Mammary epithelial cell (primary cell): ENCODE measurements at regions of chr7 and their contacts with region 1.

Region 1: DNA sequence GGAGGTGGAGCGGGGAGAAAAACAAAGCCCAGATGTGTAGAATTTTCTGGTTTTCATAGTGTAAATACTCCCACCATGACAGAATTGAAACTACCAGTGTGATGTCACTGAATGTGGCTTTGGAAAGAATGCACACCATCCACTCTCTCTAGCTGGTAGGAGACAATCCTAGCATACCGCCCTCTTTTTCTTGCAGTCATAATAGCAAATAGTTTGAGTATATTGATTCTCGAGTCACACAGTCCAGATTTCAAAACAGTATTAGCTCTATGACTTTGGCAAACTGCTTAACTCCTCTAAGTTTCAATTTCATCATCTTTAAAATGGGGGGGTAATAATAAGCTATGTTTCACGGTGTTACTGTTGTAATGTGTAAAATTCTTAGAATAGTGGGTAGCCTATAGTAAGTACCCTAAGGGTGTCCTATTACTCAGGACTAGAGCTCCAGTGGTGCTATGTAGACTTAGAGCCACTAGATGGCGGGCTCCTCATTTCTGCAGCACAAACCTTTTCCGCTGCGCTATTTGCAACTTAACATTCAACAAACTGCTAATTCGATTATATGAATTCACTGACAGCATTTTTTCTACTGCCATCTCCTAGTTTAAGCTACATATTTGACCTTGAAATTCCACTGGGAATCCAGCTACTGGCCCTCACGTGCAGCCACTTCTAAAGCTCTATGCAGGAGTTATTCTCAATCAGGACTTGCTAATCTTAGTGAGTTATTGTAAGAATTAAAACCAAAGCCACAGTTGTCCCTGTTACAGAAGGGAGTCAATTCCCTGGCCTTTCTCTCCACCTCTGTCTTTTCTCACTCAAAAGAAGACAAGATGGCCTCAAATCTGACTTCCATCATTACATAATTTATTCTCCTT is 18.7 kb downstream of the TAS2R40 start:
- DNase-seq: peak; percentile 58
- H3K4me3 ChIP-seq: no peak overlapping the region
- H3K27ac ChIP-seq: no peak overlapping the region
- H3K4me1 ChIP-seq: peaks cover 13% of the 10 kb centered on the region
- H3K27me3 ChIP-seq: no peaks in the 10 kb centered on the region
- CTCF ChIP-seq: peak; percentile 92 to 95

Region 2: GRCh38 chr7:143104832-143105241 is 135.7 kb before region 1 on chr7:
- CTCF ChIA-PET with region 1: no interaction called
- dilution Hi-C with region 1: no loop called
- in situ Hi-C with region 1: no loop called
- intact Hi-C with region 1: no loop called
- DNase-seq: no peak
- H3K4me3 ChIP-seq: no peak overlapping the region
- H3K27ac ChIP-seq: no peak overlapping the region
- H3K4me1 ChIP-seq: no peaks in the 10 kb centered on the region
- H3K27me3 ChIP-seq: peaks cover 4% of the 10 kb centered on the region
- CTCF ChIP-seq: no peak

Region 3: DNA sequence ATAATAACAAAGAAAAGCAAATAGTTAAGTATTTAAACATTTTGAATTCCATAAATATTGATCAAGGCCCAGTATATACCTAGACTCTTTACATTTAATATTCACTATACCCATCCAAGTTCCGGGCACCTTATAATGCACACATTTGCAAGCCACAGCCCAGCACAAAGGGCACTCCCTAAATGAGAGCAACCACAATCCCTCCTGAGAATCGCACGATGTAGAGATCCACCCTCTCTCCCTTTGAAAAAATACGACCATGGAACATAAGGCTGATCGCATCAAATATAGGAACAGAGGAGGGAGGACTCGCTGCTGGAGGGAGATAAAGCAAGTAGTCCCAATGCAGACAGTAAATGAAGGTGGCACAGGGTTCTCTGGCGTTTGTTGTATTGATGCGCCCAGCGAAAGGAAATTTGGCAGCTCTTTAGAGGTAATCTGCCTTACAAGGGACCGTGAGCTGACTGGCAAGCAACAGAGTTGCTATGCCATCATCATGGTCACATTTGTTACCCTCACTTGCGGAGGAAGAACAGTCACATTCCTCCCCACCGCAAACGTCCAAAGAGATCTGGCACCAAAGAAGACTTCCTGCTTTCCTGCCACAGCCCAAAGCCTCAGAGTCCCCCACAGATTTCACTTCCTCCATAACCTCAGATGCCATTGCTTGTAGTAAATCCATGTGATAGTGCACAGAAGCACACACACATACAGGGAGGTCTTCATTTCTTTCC is 34.8 kb before region 1 on chr7:
- CTCF ChIA-PET with region 1: no interaction called
- dilution Hi-C with region 1: no loop called
- in situ Hi-C with region 1: no loop called
- intact Hi-C with region 1: no loop called
- DNase-seq: no peak
- H3K4me3 ChIP-seq: no peak overlapping the region
- H3K27ac ChIP-seq: no peak overlapping the region
- H3K4me1 ChIP-seq: peaks cover 5% of the 10 kb centered on the region
- H3K27me3 ChIP-seq: no peaks in the 10 kb centered on the region
- CTCF ChIP-seq: no peak

Region 4: GRCh38 chr7:143287935-143288826 is 47.7 kb after region 1 on chr7 and contains the start of gene CASP2:
- CTCF ChIA-PET with region 1: no interaction called
- dilution Hi-C with region 1: loop called (anchors 5 kb)
- in situ Hi-C with region 1: no loop called
- intact Hi-C with region 1: loop called (anchors 5 kb)
- DNase-seq: peak; percentile 97
- H3K4me3 ChIP-seq: peak within 1 kb of the TSS; percentile 64 to 87 (median 78)
- H3K27ac ChIP-seq: peak within 1 kb of the TSS; percentile 86
- H3K4me1 ChIP-seq: peaks cover 41% of the 10 kb centered on the region
- H3K27me3 ChIP-seq: no peaks in the 10 kb centered on the region
- CTCF ChIP-seq: peak in 1 of 2 donors; percentile 34
- total RNA-seq, gene CASP2: 18.3 to 43.5 TPM

Region 5: GRCh38 chr7:143299840-143300239 is 59.3 kb after region 1 on chr7:
- CTCF ChIA-PET with region 1: interaction called, 5 read pairs
- dilution Hi-C with region 1: no loop called
- in situ Hi-C with region 1: no loop called
- intact Hi-C with region 1: loop called (anchors 1 kb)
- DNase-seq: no peak
- H3K4me3 ChIP-seq: no peak overlapping the region
- H3K27ac ChIP-seq: no peak overlapping the region
- H3K4me1 ChIP-seq: peaks cover 8% of the 10 kb centered on the region
- H3K27me3 ChIP-seq: no peaks in the 10 kb centered on the region
- CTCF ChIP-seq: peak; percentile 70

Region 6: DNA sequence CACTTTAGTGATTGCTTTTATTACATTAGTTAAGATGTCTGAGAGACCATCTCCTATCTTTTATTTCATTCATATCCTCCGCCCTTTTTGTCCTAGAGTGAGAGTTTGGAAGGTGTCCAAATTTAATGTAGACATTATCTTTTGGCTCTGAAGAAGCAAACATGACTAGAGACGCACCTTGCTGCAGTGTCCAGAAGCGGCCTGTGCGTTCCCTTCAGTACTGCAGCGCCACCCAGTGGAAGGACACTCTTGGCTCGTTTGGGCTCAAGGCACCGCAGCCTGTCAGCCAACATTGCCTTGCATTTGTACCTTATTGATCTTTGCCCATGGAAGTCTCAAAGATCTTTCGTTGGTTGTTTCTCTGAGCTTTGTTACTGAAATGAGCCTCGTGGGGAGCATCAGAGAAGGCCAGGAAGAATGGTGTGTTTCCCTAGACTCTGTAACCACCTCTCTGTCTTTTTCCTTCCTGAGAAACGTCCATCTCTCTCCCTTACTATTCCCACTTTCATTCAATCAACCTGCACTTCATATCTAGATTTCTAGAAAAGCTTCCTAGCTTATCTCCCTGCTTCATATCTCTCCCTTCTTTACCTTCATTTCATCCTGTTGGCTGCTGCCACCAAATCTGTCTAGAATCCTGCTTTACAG is 65.0 kb after region 1 on chr7:
- CTCF ChIA-PET with region 1: no interaction called
- dilution Hi-C with region 1: no loop called
- in situ Hi-C with region 1: no loop called
- intact Hi-C with region 1: loop called (anchors 1 kb)
- DNase-seq: peak; percentile 41
- H3K4me3 ChIP-seq: no peak overlapping the region
- H3K27ac ChIP-seq: no peak overlapping the region
- H3K4me1 ChIP-seq: peaks cover 8% of the 10 kb centered on the region
- H3K27me3 ChIP-seq: no peaks in the 10 kb centered on the region
- CTCF ChIP-seq: peak; percentile 76 to 80

Region 7: GRCh38 chr7:143408686-143409561 is 168.4 kb after region 1 on chr7 and contains the start of gene EPHA1:
- CTCF ChIA-PET with region 1: interaction called, 4 read pairs
- dilution Hi-C with region 1: no loop called
- in situ Hi-C with region 1: no loop called
- intact Hi-C with region 1: loop called (anchors 2 kb)
- DNase-seq: peak; percentile 82
- H3K4me3 ChIP-seq: peak within 1 kb of the TSS; percentile 56 to 82 (median 79)
- H3K27ac ChIP-seq: peak within 1 kb of the TSS; percentile 32
- H3K4me1 ChIP-seq: peaks cover 27% of the 10 kb centered on the region
- H3K27me3 ChIP-seq: no peaks in the 10 kb centered on the region
- CTCF ChIP-seq: peak; percentile 45 to 66
- total RNA-seq, gene EPHA1: 15.2 to 27.3 TPM

Region 8: DNA sequence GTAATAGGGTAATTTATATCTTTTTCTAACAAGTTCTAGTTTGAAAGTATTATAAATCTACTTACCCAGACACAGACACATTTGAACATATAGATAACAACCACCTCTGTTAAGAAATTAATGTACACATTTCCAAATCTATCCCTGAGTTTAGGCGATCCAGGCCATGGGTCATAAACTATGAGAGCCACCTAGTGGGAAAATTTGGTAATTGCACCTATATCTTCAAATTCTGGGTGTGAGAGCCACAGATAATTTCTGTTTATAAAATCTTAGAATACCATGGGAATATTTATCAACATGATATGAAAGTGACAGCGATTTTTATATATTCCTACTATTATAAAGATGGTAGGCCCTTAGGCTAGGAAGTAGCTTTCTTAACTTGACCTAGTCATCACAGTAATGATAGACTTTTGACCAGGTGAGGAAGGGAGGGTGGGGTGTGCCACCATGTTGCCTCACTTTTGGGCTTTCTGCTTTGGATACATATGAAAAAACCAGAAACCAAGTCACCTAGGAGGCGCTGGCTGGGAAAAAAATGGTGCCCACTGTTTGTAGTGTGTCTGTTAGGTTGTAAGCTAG is 176.1 kb after region 1 on chr7:
- CTCF ChIA-PET with region 1: interaction called, 4 read pairs
- dilution Hi-C with region 1: no loop called
- in situ Hi-C with region 1: no loop called
- intact Hi-C with region 1: loop called (anchors 1 kb)
- DNase-seq: no peak
- H3K4me3 ChIP-seq: peak overlapping the region in 2 of 3 experiments; percentile 33 to 38
- H3K27ac ChIP-seq: peak overlapping the region; percentile 89
- H3K4me1 ChIP-seq: peaks cover 33% of the 10 kb centered on the region
- H3K27me3 ChIP-seq: no peaks in the 10 kb centered on the region
- CTCF ChIP-seq: peak; percentile 61 to 70